ENCODE measurements at regions of chr15 and their contacts with region 1.

Region 1: DNA sequence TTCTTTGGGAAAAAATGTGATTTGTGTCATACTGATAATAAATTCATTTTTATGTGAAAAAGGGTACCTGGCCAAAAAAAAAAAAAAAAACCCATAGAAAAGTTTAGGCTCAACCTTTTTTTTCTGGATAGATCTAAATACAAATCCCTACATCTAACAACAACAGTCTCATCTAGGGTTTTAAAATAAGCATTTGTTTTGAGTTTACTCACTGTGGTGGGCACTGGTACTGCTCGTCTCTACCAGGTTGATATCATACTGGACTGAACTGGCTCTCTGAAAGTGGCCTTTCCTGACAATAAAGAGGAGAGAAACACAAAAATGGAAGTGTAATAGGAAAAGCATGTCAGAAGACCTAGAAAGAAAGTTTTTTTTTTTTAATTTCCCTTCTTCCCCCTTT is 52.0 kb downstream of the FBXO22 start:
- DNase-seq: no peak
- H3K4me3 ChIP-seq: no peak overlapping the region
- H3K27me3 ChIP-seq: no peaks in the 10 kb centered on the region
- CTCF ChIP-seq: no peak

Region 2: GRCh38 chr15:75966073-75966472 is 10.4 kb after region 1 on chr15:
- CTCF ChIA-PET with region 1: interaction called, 3 read pairs
- POLR2A ChIA-PET with region 1: interaction called, 10 read pairs
- DNase-seq: peak; percentile 25
- H3K4me3 ChIP-seq: no peak overlapping the region
- H3K27me3 ChIP-seq: no peaks in the 10 kb centered on the region
- CTCF ChIP-seq: no peak